CD8-positive, alpha-beta T cell (primary cell): ENCODE measurements at regions of chr14 and their contacts with region 1.

Region 1: DNA sequence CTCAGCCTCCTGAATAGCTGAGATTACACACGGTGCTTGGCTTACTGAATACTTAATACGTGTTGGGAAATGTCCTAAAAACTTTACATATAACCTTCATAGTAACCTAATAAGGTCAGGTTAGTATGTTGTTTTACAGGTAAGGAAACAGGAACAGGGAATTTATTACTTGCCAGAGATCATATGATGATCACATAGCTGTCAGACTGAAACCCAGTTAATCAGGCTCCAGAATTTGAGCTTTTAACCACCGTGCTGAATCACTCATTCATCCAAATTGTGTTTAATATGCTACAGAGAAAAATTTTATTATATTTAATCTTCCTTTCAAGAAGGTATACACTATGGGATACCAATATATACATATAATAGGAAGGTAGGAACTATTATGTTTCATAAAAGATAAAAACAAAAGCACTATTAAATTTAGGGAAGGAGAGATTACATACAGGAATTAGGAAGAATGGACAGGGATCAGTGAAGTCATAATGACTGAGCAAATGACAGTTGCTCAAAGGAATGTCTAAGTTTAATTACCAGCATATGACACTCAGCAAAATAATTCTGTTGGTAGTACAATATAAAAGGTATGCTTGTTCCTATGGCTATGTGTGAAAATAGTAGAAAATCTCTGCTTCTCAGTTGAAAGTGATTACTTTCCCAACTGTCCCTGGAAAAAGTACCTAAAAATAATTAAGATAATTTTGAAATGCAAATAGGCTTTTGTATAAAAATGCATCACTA is 59.3 kb downstream of the HEATR5A start:
- DNase-seq: no peak
- ATAC-seq: no peak
- H3K4me3 ChIP-seq: no peak overlapping the region
- H3K4me3 Mint-ChIP-seq: no peak overlapping the region
- H3K27ac ChIP-seq: no peak overlapping the region
- H3K27ac Mint-ChIP-seq: no peak overlapping the region
- H3K4me1 ChIP-seq: no peaks in the 10 kb centered on the region
- H3K4me1 Mint-ChIP-seq: peaks cover under 1% of the 10 kb centered on the region
- H3K27me3 ChIP-seq: no peaks in the 10 kb centered on the region
- H3K27me3 Mint-ChIP-seq: no peaks in the 10 kb centered on the region
- CTCF ChIP-seq: no peak

Region 2: GRCh38 chr14:30874120-30874998 is 486.7 kb before region 1 on chr14 and contains the start of gene COCH:
- CTCF ChIA-PET with region 1: no interaction called
- POLR2A ChIA-PET with region 1: no interaction called
- intact Hi-C with region 1: loop called in 1 of 2 experiments (anchors 5 kb)
- DNase-seq: peak in 7 of 9 experiments; percentile 6 to 57 (median 20)
- ATAC-seq: peak; percentile 66
- H3K4me3 ChIP-seq: peak within 1 kb of the TSS; percentile 51 to 60
- H3K4me3 Mint-ChIP-seq: peak within 1 kb of the TSS; percentile 76
- H3K27ac ChIP-seq: no peak within 1 kb of the TSS
- H3K27ac Mint-ChIP-seq: no peak within 1 kb of the TSS
- H3K4me1 ChIP-seq: peaks cover 8% of the 10 kb centered on the region
- H3K4me1 Mint-ChIP-seq: peaks cover 12% of the 10 kb centered on the region
- H3K27me3 ChIP-seq: peaks cover 13 to 15% of the 10 kb centered on the region in 2 experiments
- H3K27me3 Mint-ChIP-seq: peaks cover 42% of the 10 kb centered on the region
- CTCF ChIP-seq: no peak
- total RNA-seq, gene COCH: 0.33 TPM in 1 of 2 experiments, not detected in the other

Region 3: GRCh38 chr14:31084385-31084784 is 276.7 kb before region 1 on chr14:
- CTCF ChIA-PET with region 1: no interaction called
- POLR2A ChIA-PET with region 1: no interaction called
- intact Hi-C with region 1: loop called in 1 of 2 experiments (anchors 1 kb)
- DNase-seq: no peak
- ATAC-seq: no peak
- H3K4me3 ChIP-seq: no peak overlapping the region
- H3K4me3 Mint-ChIP-seq: no peak overlapping the region
- H3K27ac ChIP-seq: no peak overlapping the region
- H3K27ac Mint-ChIP-seq: no peak overlapping the region
- H3K4me1 ChIP-seq: no peaks in the 10 kb centered on the region
- H3K4me1 Mint-ChIP-seq: no peaks in the 10 kb centered on the region
- H3K27me3 ChIP-seq: no peaks in the 10 kb centered on the region
- H3K27me3 Mint-ChIP-seq: no peaks in the 10 kb centered on the region
- CTCF ChIP-seq: no peak

Region 4: GRCh38 chr14:31137214-31137889 is 223.7 kb before region 1 on chr14:
- CTCF ChIA-PET with region 1: no interaction called
- POLR2A ChIA-PET with region 1: no interaction called
- intact Hi-C with region 1: loop called in 1 of 2 experiments (anchors 10 kb)
- DNase-seq: no peak
- ATAC-seq: no peak
- H3K4me3 ChIP-seq: no peak overlapping the region
- H3K4me3 Mint-ChIP-seq: no peak overlapping the region
- H3K27ac ChIP-seq: no peak overlapping the region
- H3K27ac Mint-ChIP-seq: peak overlapping the region; percentile 32
- H3K4me1 ChIP-seq: no peaks in the 10 kb centered on the region
- H3K4me1 Mint-ChIP-seq: no peaks in the 10 kb centered on the region
- H3K27me3 ChIP-seq: no peaks in the 10 kb centered on the region
- H3K27me3 Mint-ChIP-seq: no peaks in the 10 kb centered on the region
- CTCF ChIP-seq: no peak

Region 5: GRCh38 chr14:31172084-31172483 is 189.0 kb before region 1 on chr14:
- CTCF ChIA-PET with region 1: no interaction called
- POLR2A ChIA-PET with region 1: no interaction called
- intact Hi-C with region 1: loop called (anchors 5 to 10 kb)
- DNase-seq: no peak
- ATAC-seq: no peak
- H3K4me3 ChIP-seq: no peak overlapping the region
- H3K4me3 Mint-ChIP-seq: no peak overlapping the region
- H3K27ac ChIP-seq: no peak overlapping the region
- H3K27ac Mint-ChIP-seq: no peak overlapping the region
- H3K4me1 ChIP-seq: no peaks in the 10 kb centered on the region
- H3K4me1 Mint-ChIP-seq: no peaks in the 10 kb centered on the region
- H3K27me3 ChIP-seq: no peaks in the 10 kb centered on the region
- H3K27me3 Mint-ChIP-seq: no peaks in the 10 kb centered on the region
- CTCF ChIP-seq: no peak